Heart left ventricle (tissue), 16 donors: ENCODE measurements at regions of chr2 and their contacts with region 1.

Region 1: GRCh38 chr2:101151141-101151858 is at the start of gene TBC1D8:
- DNase-seq: peak; percentile 93 to 96 (median 95)
- ATAC-seq: peak; percentile 85 to 91 (median 88)
- H3K4me3 ChIP-seq: peak within 1 kb of the TSS; percentile 72 to 95 (median 84)
- H3K27ac ChIP-seq: peak within 1 kb of the TSS; percentile 57 to 97 (median 92)
- H3K4me1 ChIP-seq: peaks cover 3 to 78% (median 59%) of the 10 kb centered on the region in 12 donors
- H3K27me3 ChIP-seq: no peaks in the 10 kb centered on the region
- CTCF ChIP-seq: peak in 1 of 12 donors; percentile 15
- POLR2A ChIP-seq: peak; percentile 50 to 95
- total RNA-seq, gene TBC1D8: 36.9 to 61.7 (median 53.3) TPM

Region 2: DNA sequence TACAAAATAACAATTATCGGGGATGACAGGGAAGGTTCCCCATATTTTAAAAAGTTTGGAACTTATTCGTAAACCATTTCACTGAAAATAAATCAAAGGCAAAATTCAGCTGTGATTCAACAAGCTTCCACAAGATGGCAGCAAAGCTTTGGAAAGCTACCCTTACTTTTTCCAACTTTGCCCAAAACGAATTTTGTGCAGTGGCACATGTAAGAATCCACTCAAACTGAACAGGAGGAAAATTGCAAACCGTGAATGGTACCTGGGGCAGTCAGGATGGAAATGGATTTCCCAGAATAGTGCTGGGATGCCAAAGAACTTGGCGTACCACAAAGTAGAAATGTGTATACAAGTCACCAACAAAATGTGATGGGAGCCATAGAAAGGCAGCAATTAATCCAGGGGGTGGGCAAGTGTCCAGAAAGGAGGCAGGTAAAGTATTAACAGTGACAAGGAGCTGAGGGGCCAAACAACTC is 138.6 kb before region 1 on chr2:
- intact Hi-C with region 1: loop called (anchors 1 to 5 kb)
- DNase-seq: no peak
- ATAC-seq: peak in 1 of 4 donors; percentile 40
- H3K4me3 ChIP-seq: no peak overlapping the region
- H3K27ac ChIP-seq: no peak overlapping the region
- H3K4me1 ChIP-seq: peaks cover 0 to 8% (median 0%) of the 10 kb centered on the region in 12 donors
- H3K27me3 ChIP-seq: no peaks in the 10 kb centered on the region
- CTCF ChIP-seq: peak; percentile 67 to 89 (median 82)
- POLR2A ChIP-seq: no peak

Region 3: DNA sequence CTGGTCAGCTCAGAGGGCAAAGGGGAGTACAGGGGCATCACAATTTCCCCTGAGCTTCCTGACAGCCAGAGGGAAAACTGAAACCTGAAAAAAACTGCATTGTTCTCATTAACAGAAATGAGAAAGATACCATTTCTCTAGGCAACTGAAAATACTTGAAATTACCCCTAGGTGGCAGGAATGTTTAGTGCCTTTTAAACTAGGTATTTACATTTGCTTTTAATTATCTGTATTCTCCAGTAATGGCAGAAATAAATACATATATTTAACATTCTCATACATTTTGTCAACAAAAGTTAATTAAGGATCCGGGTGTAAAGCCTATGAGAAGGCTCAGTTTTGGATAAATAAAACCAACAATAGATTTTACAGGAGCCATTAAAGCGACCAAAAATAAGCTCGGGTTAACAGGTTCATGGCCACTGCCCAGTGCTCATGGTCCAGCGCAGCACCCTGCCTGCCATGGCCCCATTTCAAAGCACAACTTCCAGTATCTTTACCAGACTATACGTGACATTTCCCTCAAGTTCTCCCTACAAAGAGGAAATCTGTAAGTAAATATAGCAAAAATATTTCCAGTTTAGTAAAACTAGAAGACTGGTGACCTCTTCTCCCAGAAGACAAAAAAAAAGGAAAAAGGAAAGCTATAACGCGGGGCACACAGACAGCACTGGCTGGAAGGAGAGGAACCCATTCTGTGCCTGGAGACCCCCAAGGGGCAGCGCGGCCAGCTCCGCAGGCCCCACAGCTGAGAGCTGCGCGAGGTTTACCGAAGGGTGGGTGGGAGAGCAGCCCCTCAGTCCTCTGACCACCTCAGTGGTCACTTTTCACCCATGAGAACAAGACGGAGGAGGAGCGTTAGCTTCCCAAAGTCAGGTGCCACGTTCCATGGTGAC is 114.5 kb before region 1 on chr2:
- intact Hi-C with region 1: loop called in 8 of 10 experiments (anchors 2 to 5 kb)
- DNase-seq: no peak
- ATAC-seq: no peak
- H3K4me3 ChIP-seq: no peak overlapping the region
- H3K27ac ChIP-seq: no peak overlapping the region
- H3K4me1 ChIP-seq: peaks cover 0 to 23% (median 0%) of the 10 kb centered on the region in 12 donors
- H3K27me3 ChIP-seq: no peaks in the 10 kb centered on the region
- CTCF ChIP-seq: peak; percentile 23 to 60 (median 46)
- POLR2A ChIP-seq: no peak

Region 4: GRCh38 chr2:101113396-101114267 is 37.7 kb before region 1 on chr2:
- intact Hi-C with region 1: loop called in 9 of 10 experiments (anchors 1 to 5 kb)
- DNase-seq: no peak
- ATAC-seq: no peak
- H3K4me3 ChIP-seq: no peak overlapping the region
- H3K27ac ChIP-seq: peak overlapping the region; percentile 77 to 95 (median 87)
- H3K4me1 ChIP-seq: peaks cover 7 to 93% (median 73%) of the 10 kb centered on the region in 12 donors
- H3K27me3 ChIP-seq: no peaks in the 10 kb centered on the region
- CTCF ChIP-seq: no peak
- POLR2A ChIP-seq: no peak

Region 5: GRCh38 chr2:101133492-101134100 is 17.7 kb before region 1 on chr2:
- intact Hi-C with region 1: no loop called
- DNase-seq: no peak
- ATAC-seq: peak in 1 of 4 donors; percentile 33
- H3K4me3 ChIP-seq: no peak overlapping the region
- H3K27ac ChIP-seq: peak overlapping the region in 1 of 12 donors; percentile 10
- H3K4me1 ChIP-seq: peaks cover 0 to 45% (median 5%) of the 10 kb centered on the region in 12 donors
- H3K27me3 ChIP-seq: no peaks in the 10 kb centered on the region
- CTCF ChIP-seq: no peak
- POLR2A ChIP-seq: no peak

Region 6: GRCh38 chr2:101188683-101189405 is 37.5 kb after region 1 on chr2:
- intact Hi-C with region 1: no loop called
- DNase-seq: no peak
- ATAC-seq: peak in 1 of 4 donors; percentile 36
- H3K4me3 ChIP-seq: no peak overlapping the region
- H3K27ac ChIP-seq: no peak overlapping the region
- H3K4me1 ChIP-seq: peaks cover 0 to 15% (median 0%) of the 10 kb centered on the region in 12 donors
- H3K27me3 ChIP-seq: no peaks in the 10 kb centered on the region
- CTCF ChIP-seq: peak; percentile 20 to 65 (median 42)
- POLR2A ChIP-seq: no peak

Region 7: DNA sequence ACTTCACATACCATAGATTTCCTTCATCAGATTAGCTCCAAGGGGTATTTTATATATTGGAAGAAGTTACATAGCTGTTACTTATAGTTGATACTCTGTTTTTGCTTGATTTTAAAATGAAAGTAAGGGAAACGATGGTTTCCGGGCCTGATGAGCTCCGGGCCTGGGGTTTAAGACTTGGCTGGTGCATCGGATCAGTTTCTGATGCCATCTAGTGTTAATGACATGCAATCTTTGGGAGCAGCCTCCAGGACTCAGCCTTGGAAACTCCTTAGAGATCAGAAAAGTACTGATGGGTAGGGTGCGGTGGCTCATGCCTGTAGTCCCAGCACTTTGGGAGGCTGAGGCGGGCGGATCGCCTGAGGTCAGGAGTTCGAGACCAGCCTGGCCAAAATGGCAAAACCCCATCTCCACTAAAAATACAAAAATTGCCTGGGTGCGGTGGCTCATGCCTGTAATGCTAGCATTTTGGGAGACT is 54.3 kb after region 1 on chr2:
- intact Hi-C with region 1: loop called in 3 of 10 experiments (anchors 1 to 5 kb)
- DNase-seq: peak in 4 of 5 donors; percentile 38 to 53 (median 44)
- ATAC-seq: peak; percentile 59 to 93 (median 90)
- H3K4me3 ChIP-seq: peak overlapping the region in 8 of 12 donors; percentile 14 to 40 (median 32)
- H3K27ac ChIP-seq: no peak overlapping the region
- H3K4me1 ChIP-seq: peaks cover 0 to 14% (median 0%) of the 10 kb centered on the region in 12 donors
- H3K27me3 ChIP-seq: no peaks in the 10 kb centered on the region
- CTCF ChIP-seq: peak; percentile 25 to 72 (median 52)
- POLR2A ChIP-seq: no peak

Region 8: DNA sequence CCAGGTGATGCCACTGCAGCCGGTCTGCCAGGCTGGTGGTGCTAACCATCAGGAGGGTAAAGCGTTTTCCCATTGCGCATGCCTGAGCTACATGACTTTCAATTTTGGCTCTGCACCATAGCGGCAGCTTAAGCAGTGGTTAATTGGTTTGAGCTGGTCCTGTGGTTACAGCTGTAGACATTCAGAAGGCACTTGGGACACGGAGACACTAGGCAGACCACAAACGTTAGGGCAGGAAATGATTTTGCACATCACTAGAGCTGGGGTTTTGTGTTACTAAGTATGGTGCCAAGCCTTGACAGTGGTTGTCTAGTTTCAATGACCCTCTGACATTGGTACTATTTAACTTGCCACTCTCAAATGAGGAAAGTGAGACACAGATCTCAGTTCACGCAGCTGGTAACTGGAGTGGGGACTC is 72.5 kb after region 1 on chr2:
- intact Hi-C with region 1: no loop called
- DNase-seq: no peak
- ATAC-seq: peak in 1 of 4 donors; percentile 44
- H3K4me3 ChIP-seq: no peak overlapping the region
- H3K27ac ChIP-seq: no peak overlapping the region
- H3K4me1 ChIP-seq: peaks cover 0 to 6% (median 0%) of the 10 kb centered on the region in 12 donors
- H3K27me3 ChIP-seq: no peaks in the 10 kb centered on the region
- CTCF ChIP-seq: no peak
- POLR2A ChIP-seq: no peak